BJ (cell line): ENCODE measurements at regions of chr2 and their contacts with region 1.

Region 1: GRCh38 chr2:39948016-39948719 is 169.1 kb upstream of the THUMPD2 start:
- DNase-seq: peak; percentile 42
- H3K4me3 ChIP-seq: no peak overlapping the region
- H3K27me3 ChIP-seq: no peaks in the 10 kb centered on the region
- CTCF ChIP-seq: no peak

Region 2: GRCh38 chr2:39996653-39997080 is 48.5 kb after region 1 on chr2:
- CTCF ChIA-PET with region 1: no interaction called
- POLR2A ChIA-PET with region 1: interaction called, 12 read pairs
- DNase-seq: peak; percentile 49
- H3K4me3 ChIP-seq: no peak overlapping the region
- H3K27me3 ChIP-seq: no peaks in the 10 kb centered on the region
- CTCF ChIP-seq: no peak